ENCODE measurements at regions of chr22 and their contacts with region 1.

Region 1: DNA sequence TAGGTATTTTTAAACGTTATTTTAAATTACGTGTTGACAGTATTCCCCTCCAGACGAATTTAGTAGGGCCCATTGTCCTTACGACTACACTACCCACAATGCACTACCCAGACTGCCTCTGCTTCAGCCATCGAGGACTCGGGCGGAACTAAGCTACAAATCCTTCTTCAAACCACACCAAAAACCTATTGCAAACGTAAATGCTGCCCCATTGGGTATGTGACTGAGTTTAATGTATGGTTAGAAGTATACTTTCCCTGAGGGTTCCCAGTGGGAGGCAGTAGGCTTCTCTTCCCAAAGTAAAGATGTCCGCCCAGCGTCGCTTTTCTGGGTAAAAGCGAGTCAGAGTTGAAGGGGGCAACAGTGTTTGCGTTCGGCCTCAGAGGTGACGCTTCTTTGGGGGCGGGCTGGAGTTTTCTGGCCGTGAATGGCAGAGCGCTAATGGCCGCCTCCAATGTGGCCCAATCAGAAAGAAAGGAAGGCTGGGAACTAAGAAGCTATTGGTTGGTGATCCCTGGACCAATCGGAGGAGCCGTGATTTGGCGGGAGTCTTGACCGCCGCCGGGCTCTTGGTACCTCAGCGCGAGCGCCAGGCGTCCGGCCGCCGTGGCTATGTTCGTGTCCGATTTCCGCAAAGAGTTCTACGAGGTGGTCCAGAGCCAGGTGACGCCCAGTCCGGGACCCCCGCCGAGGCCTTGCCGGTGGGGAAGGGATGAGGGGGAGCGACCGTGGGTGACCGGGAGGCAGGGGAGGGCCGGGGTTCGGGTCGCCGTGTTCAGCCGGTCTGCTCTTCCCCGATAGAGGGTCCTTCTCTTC is at the start of gene CDC45:
- DNase-seq: peak; percentile 93 to 98
- ATAC-seq: peak; percentile 95 to 99 (median 98)
- H3K4me3 ChIP-seq: peak within 1 kb of the TSS; percentile 58 to 95 (median 86)
- H3K27ac ChIP-seq: peak within 1 kb of the TSS; percentile 93 to 100 (median 98)
- H3K4me1 ChIP-seq: peaks cover 3 to 45% (median 31%) of the 10 kb centered on the region in 9 donors
- H3K27me3 ChIP-seq: no peaks in the 10 kb centered on the region
- CTCF ChIP-seq: no peak
- total RNA-seq, gene CDC45: 0.21 to 3.4 (median 0.69) TPM in 6 of 10 donors, not detected in the others

Region 2: GRCh38 chr22:19178656-19179496 is 300.7 kb before region 1 on chr22 and contains the start of gene SLC25A1:
- intact Hi-C with region 1: loop called in 2 of 10 experiments (anchors 1 to 2 kb)
- DNase-seq: peak; percentile 90 to 95
- ATAC-seq: peak; percentile 87 to 94 (median 90)
- H3K4me3 ChIP-seq: peak within 1 kb of the TSS; percentile 66 to 96 (median 89)
- H3K27ac ChIP-seq: peak within 1 kb of the TSS; percentile 77 to 93 (median 88)
- H3K4me1 ChIP-seq: peaks cover 16 to 51% (median 37%) of the 10 kb centered on the region in 9 donors
- H3K27me3 ChIP-seq: no peaks in the 10 kb centered on the region
- CTCF ChIP-seq: no peak
- total RNA-seq, gene SLC25A1: 14.8 to 29.1 (median 19.9) TPM

Region 3: DNA sequence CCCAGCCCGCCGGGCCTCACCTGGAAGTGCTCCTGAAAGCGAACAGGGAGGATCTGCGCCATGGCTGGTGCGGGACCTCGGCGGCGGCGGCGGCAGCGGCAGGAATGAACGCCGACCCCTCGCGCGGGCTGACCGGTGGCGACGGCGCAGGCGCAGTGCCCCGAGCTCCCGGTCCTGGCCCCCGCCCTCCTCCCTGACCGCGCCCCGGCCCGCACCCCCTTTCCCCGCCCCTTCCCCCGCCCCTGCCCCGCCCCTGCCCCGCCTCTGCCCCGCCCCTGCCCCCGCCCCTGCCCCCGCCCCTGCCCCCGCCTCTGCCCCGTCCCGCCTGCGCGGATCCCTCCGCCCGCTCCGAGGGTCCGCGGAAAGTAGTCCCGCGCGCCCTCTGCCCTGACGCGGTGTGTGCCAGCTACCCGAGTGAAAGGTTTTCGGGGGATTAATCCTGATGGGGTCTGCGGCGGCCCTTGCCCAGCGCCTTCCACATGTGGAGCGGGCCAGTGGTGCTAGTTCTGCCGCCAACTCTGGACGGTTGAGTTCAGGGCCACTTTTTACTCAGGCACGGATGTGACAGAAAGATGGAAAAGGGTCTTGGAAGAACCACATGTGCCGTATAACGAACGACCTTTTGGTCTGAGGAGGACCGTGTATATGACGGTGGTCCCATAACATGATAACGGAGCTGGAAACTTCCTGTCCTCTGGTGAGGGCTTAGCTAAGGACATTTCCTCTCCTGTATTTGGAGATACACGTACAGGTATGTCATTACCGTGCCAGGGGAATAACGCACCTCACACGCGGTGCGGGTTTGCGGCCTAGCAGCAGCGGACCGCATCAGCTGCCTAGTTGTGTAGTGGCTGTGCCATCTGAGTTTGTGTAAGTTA is 187.7 kb before region 1 on chr22 and contains the start of gene CLTCL1:
- intact Hi-C with region 1: loop called in 1 of 10 experiments (anchors 10 kb)
- DNase-seq: peak; percentile 84 to 89
- ATAC-seq: peak; percentile 81 to 95 (median 90)
- H3K4me3 ChIP-seq: peak within 1 kb of the TSS; percentile 72 to 99 (median 92)
- H3K27ac ChIP-seq: peak within 1 kb of the TSS; percentile 69 to 90 (median 81)
- H3K4me1 ChIP-seq: peaks cover 4 to 43% (median 24%) of the 10 kb centered on the region in 9 donors
- H3K27me3 ChIP-seq: no peaks in the 10 kb centered on the region
- CTCF ChIP-seq: no peak
- total RNA-seq, gene CLTCL1: 7.1 to 21.9 (median 13.6) TPM

Region 4: GRCh38 chr22:19419464-19420178 is 59.9 kb before region 1 on chr22:
- intact Hi-C with region 1: loop called in 1 of 10 experiments (anchors 10 kb)
- DNase-seq: no peak
- ATAC-seq: peak in 2 of 8 donors; percentile 31 to 44
- H3K4me3 ChIP-seq: no peak overlapping the region
- H3K27ac ChIP-seq: peak overlapping the region in 1 of 10 donors; percentile 76
- H3K4me1 ChIP-seq: peaks cover 3 to 58% (median 20%) of the 10 kb centered on the region in 9 donors
- H3K27me3 ChIP-seq: no peaks in the 10 kb centered on the region
- CTCF ChIP-seq: no peak

Region 5: DNA sequence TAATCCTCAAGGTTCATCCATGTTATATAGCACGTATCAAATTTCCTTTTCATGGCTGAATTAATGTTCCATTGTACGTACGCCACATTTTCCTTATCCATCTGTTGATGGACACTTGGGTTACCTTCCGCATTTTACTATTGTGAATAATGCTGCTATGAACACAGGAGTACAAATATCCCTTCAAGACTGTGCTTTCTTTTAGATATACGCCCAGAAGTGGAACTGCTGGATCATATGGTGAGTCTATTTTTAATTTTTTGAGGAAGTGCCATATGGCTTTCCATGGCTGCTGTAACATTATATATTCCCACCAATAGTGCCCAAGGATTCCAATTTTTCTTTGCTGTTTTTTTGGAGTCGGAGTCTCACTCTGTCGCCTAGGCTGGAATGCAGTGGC is 41.3 kb before region 1 on chr22:
- intact Hi-C with region 1: loop called in 3 of 10 experiments (anchors 5 kb)
- DNase-seq: no peak
- ATAC-seq: no peak
- H3K4me3 ChIP-seq: no peak overlapping the region
- H3K27ac ChIP-seq: no peak overlapping the region
- H3K4me1 ChIP-seq: peaks cover 0 to 44% (median 12%) of the 10 kb centered on the region in 9 donors
- H3K27me3 ChIP-seq: no peaks in the 10 kb centered on the region
- CTCF ChIP-seq: no peak

Region 6: GRCh38 chr22:19629720-19630419 is 150.3 kb after region 1 on chr22:
- intact Hi-C with region 1: loop called in 1 of 10 experiments (anchors 10 kb)
- DNase-seq: peak; percentile 75 to 82
- ATAC-seq: peak; percentile 87 to 94 (median 90)
- H3K4me3 ChIP-seq: no peak overlapping the region
- H3K27ac ChIP-seq: no peak overlapping the region
- H3K4me1 ChIP-seq: peaks cover 0 to 7% (median 0%) of the 10 kb centered on the region in 9 donors
- H3K27me3 ChIP-seq: peaks cover 0 to 13% (median under 1%) of the 10 kb centered on the region in 7 donors
- CTCF ChIP-seq: peak; percentile 91 to 98 (median 95)